GM10248 (cell line): ENCODE measurements at regions of chr12 and their contacts with region 1.

Region 1: DNA sequence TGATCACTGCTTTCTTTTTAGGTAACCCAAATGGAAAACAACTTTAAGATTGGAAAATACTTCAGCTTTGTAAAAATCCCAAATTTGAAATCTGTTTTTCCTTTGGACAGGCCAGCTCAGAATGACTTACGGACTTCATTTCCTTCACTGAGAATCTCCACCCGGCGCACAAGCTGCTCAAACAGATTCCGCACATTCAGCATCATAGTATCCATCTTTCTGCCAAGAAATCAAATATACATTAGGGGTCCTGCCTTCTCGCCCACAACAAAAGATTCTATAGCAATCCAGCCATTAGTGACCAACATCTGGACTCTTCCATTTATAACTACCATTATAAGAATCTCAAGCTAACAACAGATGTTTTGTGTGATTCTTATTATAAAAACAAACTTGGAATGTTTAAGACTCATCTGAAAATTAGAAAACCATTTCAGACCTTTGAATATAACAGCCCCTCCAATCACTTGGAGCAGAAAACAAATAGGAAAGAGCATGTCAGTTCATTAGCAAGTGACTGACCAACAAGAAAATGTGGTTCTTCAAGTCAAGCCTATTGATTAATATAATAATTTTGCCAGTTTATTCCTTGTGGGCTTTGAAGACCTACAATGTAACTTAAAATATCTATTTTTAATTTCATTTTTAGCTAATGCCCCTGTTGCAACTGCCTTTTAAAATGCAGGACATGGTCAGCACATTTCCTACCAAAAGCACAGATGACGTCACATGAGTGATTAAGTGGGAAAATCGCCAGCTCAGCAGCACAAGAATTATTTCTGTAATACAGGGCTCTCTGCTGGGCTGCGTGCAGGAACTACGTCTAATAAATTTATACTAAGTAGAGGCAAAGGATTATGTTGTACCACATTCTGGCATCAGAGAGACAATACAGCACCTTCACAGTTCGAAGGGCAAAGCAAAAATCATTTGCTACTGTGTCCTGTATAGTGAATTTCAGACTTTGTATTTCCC is 8.5 kb downstream of the RACGAP1 start:
- DNase-seq: no peak
- CTCF ChIP-seq: no peak

Region 2: GRCh38 chr12:49274396-49275286 is 742.1 kb before region 1 on chr12:
- CTCF ChIA-PET with region 1: no interaction called
- POLR2A ChIA-PET with region 1: interaction called, 11 read pairs
- DNase-seq: no peak
- CTCF ChIP-seq: no peak

Region 3: GRCh38 chr12:49515266-49515665 is 501.5 kb before region 1 on chr12:
- CTCF ChIA-PET with region 1: no interaction called
- POLR2A ChIA-PET with region 1: no interaction called
- DNase-seq: no peak
- CTCF ChIP-seq: no peak

Region 4: GRCh38 chr12:49842519-49843352 is 174.1 kb before region 1 on chr12 and contains the start of gene BCDIN3D:
- CTCF ChIA-PET with region 1: no interaction called
- POLR2A ChIA-PET with region 1: no interaction called
- DNase-seq: peak; percentile 92
- CTCF ChIP-seq: no peak

Region 5: DNA sequence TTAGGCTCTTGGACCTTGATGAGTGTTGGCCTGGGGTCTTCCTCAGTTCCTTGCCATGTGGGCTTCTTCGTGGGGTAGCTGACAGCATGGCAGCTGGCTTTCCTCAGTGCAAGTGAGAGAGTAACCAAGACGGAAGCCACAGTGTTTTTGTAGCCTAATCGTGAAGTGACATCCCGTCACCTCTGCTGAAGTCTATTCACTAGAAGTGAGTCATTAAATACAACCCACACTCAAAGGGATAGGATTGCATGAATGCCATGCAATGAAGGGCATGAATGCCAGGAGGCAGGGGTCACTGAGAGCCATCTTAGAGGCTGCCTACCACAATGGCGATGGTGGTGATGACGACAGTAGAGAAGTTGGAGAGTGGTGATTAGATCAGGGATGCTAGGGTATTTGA is 27.1 kb after region 1 on chr12:
- CTCF ChIA-PET with region 1: interaction called, 35 read pairs
- POLR2A ChIA-PET with region 1: no interaction called
- DNase-seq: no peak
- CTCF ChIP-seq: no peak